Breast epithelium (tissue), 4 donors: ENCODE measurements at regions of chr5 and their contacts with region 1.

Region 1: GRCh38 chr5:84961903-84962302 is 577.2 kb upstream of the EDIL3 start:
- DNase-seq: no peak
- H3K4me3 ChIP-seq: no peak overlapping the region
- H3K27ac ChIP-seq: no peak overlapping the region
- H3K4me1 ChIP-seq: no peaks in the 10 kb centered on the region
- H3K27me3 ChIP-seq: no peaks in the 10 kb centered on the region
- CTCF ChIP-seq: no peak
- POLR2A ChIP-seq: no peak

Region 2: GRCh38 chr5:83000428-83000827 is 1961.5 kb before region 1 on chr5:
- intact Hi-C with region 1: no loop called
- DNase-seq: no peak
- H3K4me3 ChIP-seq: no peak overlapping the region
- H3K27ac ChIP-seq: no peak overlapping the region
- H3K4me1 ChIP-seq: no peaks in the 10 kb centered on the region
- H3K27me3 ChIP-seq: no peaks in the 10 kb centered on the region
- CTCF ChIP-seq: no peak
- POLR2A ChIP-seq: no peak

Region 3: DNA sequence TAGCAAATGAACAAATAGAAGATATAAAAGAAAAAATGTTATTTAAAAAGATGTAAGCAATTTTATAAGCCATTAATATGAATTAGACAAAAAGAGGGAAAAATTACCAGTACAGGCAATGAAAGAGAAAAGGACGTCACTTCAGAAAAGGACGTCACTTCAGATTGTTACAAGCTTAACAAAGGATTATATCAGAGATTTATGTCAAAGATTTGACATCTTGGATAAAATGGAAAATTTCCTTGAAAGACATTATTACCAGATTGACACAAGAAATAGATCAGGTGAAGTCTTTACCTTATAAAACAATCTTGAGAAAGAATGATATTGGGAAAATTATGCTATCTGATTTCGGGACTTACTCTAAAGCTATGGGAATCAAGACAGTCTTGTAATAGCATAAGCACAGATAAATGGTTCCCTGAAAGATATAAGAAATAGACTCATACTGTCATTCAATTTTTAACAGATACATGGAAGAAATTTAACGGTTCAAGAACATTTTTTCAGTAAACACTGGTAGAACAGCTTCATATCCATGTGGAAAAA is 48.2 kb after region 1 on chr5:
- intact Hi-C with region 1: loop called (anchors 2 kb)
- DNase-seq: no peak
- H3K4me3 ChIP-seq: no peak overlapping the region
- H3K27ac ChIP-seq: no peak overlapping the region
- H3K4me1 ChIP-seq: no peaks in the 10 kb centered on the region
- H3K27me3 ChIP-seq: no peaks in the 10 kb centered on the region
- CTCF ChIP-seq: no peak
- POLR2A ChIP-seq: no peak